ENCODE measurements at regions of chr10 and their contacts with region 1.

Region 1: DNA sequence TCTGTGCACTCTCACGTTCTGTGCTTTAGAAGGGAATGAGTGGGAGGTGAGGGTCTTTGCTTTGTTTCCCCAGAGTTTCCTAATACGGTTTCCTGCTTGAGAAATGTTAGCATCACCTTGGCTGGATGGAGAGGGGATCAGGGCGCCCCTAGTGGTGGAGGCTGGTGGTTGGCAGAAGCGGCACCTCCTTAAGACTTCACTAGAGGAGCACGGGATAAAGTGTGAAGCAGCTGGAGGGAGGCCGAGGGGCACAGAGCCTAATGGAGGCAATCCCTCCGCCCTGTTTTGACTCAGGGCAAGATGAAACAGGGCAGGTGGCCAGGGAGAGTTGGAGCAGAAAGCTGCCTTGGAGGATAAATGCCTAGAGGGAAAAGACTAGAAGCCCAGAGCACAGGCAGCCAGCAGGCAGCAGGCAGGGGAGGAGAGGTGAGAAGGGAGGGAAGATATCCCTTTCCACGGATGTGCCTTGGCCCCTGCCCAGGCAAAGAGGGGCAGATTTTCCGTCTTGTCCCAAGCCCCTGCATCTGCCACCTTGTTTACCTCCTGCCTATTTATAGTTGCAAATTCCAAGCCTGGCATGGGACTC is 56.0 kb upstream of the BTRC start:
- DNase-seq: peak; percentile 66 to 82
- H3K4me3 ChIP-seq: no peak overlapping the region
- H3K4me3 Mint-ChIP-seq: no peak overlapping the region
- H3K27ac Mint-ChIP-seq: no peak overlapping the region
- H3K4me1 ChIP-seq: no peaks in the 10 kb centered on the region
- H3K4me1 Mint-ChIP-seq: peaks cover 6% of the 10 kb centered on the region
- H3K27me3 ChIP-seq: peaks cover 3% of the 10 kb centered on the region
- H3K27me3 Mint-ChIP-seq: peaks cover 32% of the 10 kb centered on the region
- CTCF ChIP-seq: peak; percentile 88 to 95

Region 2: DNA sequence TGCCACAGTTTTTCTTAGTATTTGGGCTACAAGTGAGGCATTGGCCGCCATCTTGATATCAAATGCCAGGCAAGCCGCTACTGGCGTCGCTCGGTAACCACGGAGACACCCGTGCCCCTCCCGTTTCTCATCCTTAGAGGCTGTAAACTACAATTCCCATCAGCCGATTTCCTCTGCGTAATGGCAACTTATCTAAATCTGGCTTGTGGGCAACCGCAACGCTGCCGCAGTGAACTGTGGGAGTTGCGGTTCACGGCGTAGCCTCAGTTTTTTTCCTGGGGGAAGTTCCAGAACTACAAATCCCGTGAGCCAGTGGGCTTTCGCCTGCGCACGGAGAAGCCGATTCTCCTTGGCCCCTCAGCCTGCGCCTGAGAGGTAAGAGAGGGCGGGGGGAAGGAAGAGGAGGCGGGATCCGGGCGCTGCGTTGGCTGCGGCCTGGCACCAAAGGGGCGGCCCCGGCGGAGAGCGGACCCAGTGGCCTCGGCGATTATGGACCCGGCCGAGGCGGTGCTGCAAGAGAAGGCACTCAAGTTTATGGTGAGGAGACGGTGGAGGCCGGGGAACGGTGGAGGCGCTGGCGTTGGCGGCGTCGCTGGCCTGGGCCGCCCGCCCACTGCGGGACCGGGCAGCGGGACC is 55.8 kb after region 1 on chr10 and contains the start of gene BTRC:
- CTCF ChIA-PET with region 1: interaction called, 6 read pairs
- POLR2A ChIA-PET with region 1: no interaction called
- intact Hi-C with region 1: loop called (anchors 2 kb)
- DNase-seq: peak; percentile 97
- H3K4me3 ChIP-seq: peak within 1 kb of the TSS; percentile 58
- H3K4me3 Mint-ChIP-seq: peak within 1 kb of the TSS; percentile 91
- H3K27ac Mint-ChIP-seq: peak within 1 kb of the TSS; percentile 82
- H3K4me1 ChIP-seq: peaks cover 8% of the 10 kb centered on the region; the same call in 1 of the 2 replicates
- H3K4me1 Mint-ChIP-seq: peaks cover 8% of the 10 kb centered on the region
- H3K27me3 ChIP-seq: no peaks in the 10 kb centered on the region
- H3K27me3 Mint-ChIP-seq: peaks cover 15% of the 10 kb centered on the region
- CTCF ChIP-seq: no peak
- total RNA-seq, gene BTRC: 19.6 and 20.0 TPM in 2 replicates

Region 3: GRCh38 chr10:101441541-101442455 is 143.8 kb after region 1 on chr10:
- CTCF ChIA-PET with region 1: interaction called, 28 read pairs
- POLR2A ChIA-PET with region 1: no interaction called
- intact Hi-C with region 1: loop called (anchors 1 kb)
- DNase-seq: peak; percentile 53 to 68
- H3K4me3 ChIP-seq: no peak overlapping the region
- H3K4me3 Mint-ChIP-seq: no peak overlapping the region
- H3K27ac Mint-ChIP-seq: no peak overlapping the region
- H3K4me1 ChIP-seq: no peaks in the 10 kb centered on the region
- H3K4me1 Mint-ChIP-seq: no peaks in the 10 kb centered on the region
- H3K27me3 ChIP-seq: no peaks in the 10 kb centered on the region
- H3K27me3 Mint-ChIP-seq: no peaks in the 10 kb centered on the region
- CTCF ChIP-seq: peak in 1 of 2 experiments; percentile 76

Region 4: DNA sequence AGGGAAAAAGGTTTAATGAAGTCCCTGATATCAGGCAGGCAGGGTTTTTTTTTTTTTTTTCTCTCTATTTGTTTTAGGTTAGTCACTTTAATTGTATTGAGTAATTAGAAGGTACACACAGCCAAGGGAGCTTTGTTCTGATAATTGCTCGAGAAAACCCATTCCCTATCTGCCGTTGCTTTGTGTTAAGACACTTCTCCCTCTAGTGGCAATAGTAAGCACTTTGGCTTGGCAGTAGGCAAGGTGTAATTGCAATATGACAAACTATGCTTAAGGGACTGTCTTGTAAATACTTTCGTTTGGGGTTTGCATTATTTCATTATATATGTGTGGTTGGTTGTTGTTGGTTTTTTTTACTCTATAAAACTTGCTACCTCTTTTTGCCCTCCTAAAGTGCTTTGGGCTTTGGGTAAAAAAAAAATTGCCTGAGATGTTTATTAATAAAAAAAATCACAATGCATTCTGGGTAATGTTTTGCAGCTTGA is 169.3 kb after region 1 on chr10:
- CTCF ChIA-PET with region 1: interaction called, 13 read pairs
- POLR2A ChIA-PET with region 1: no interaction called
- intact Hi-C with region 1: loop called (anchors 1 kb)
- DNase-seq: peak; percentile 51 to 56
- H3K4me3 ChIP-seq: no peak overlapping the region
- H3K4me3 Mint-ChIP-seq: no peak overlapping the region
- H3K27ac Mint-ChIP-seq: no peak overlapping the region
- H3K4me1 ChIP-seq: no peaks in the 10 kb centered on the region
- H3K4me1 Mint-ChIP-seq: no peaks in the 10 kb centered on the region
- H3K27me3 ChIP-seq: no peaks in the 10 kb centered on the region
- H3K27me3 Mint-ChIP-seq: no peaks in the 10 kb centered on the region
- CTCF ChIP-seq: peak; percentile 84 to 90

Region 5: DNA sequence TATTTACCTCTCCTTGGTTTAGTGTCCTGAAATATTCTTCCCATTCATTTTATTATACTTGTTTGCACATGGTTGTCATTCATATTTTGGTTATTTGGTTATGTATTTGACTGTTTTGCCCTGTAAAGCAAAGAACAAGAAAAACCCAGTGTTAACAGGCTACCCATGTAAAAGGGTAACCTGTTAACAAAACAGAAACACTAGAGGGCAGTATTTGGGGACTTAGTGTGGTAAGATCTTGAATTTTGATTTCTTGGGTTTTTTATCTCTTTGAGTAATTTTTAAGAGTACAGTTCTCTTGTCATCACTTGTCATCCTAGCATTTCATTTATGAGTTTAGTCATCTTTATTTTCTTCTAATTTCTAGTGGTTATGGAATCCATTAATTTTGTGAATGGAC is 238.8 kb after region 1 on chr10:
- CTCF ChIA-PET with region 1: interaction called, 14 read pairs
- POLR2A ChIA-PET with region 1: no interaction called
- intact Hi-C with region 1: no loop called
- DNase-seq: no peak
- H3K4me3 ChIP-seq: no peak overlapping the region
- H3K4me3 Mint-ChIP-seq: no peak overlapping the region
- H3K27ac Mint-ChIP-seq: no peak overlapping the region
- H3K4me1 ChIP-seq: no peaks in the 10 kb centered on the region
- H3K4me1 Mint-ChIP-seq: no peaks in the 10 kb centered on the region
- H3K27me3 ChIP-seq: no peaks in the 10 kb centered on the region
- H3K27me3 Mint-ChIP-seq: no peaks in the 10 kb centered on the region
- CTCF ChIP-seq: peak; percentile 46 to 49

Measured in Caco-2 (cell line).